ENCODE measurements at regions of chr11 and their contacts with region 1.

Region 1: DNA sequence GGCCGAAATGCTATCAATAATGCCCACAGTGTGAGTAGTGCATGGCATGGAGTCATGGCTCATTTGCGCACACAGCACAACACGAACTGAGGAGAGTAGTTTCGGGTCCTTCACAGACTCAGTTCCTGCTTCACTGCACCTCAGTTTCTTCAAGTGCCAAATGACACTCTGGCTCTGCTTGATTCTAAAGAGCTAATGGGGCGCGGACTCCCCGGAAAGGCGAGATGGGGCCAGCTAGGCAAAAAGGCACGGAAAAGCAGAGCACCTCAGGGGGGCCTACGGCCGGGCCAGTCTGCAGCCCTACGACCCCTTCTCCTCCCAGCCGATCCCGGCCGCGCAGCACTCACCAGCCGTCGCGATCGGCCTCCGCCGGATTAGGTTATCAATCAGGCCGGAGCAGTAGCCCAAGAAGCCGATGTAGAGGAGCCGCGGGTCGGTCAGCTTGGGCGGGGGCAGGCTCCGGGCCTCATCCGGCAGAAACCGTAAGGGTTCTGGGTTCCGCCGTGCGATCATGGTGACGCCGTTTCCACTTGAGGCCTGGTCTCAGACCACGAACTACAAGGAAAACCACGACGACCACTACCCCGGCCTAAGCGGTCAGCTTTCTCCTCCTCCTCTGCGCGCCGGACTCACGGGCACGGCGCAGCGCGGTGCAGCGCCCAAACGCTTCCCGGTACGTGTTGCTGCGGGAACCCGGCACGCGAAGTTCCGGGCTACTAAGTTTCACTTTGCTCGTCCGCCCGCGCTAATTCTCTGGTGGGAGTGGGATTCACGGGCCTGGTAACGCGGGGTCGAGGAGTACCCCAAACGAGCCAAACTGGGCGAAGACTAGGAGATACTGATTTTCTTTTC is at the start of gene NDUFC2:
- DNase-seq: peak; percentile 73 to 89 (median 82)
- H3K4me3 ChIP-seq: peak within 1 kb of the TSS; percentile 30 to 88 (median 76)
- H3K27ac ChIP-seq: peak within 1 kb of the TSS; percentile 58 to 93 (median 89)
- H3K4me1 ChIP-seq: peaks cover 18 to 43% of the 10 kb centered on the region in 2 donors
- H3K27me3 ChIP-seq: no peaks in the 10 kb centered on the region
- CTCF ChIP-seq: peak in 1 of 6 experiments; percentile 28
- POLR2A ChIP-seq: peak; percentile 64 to 80
- total RNA-seq, gene NDUFC2: 259 to 487 (median 380) TPM

Region 2: GRCh38 chr11:77497368-77497767 is 582.1 kb before region 1 on chr11:
- intact Hi-C with region 1: no loop called
- DNase-seq: no peak
- H3K4me3 ChIP-seq: no peak overlapping the region
- H3K27ac ChIP-seq: no peak overlapping the region
- H3K4me1 ChIP-seq: no peaks in the 10 kb centered on the region
- H3K27me3 ChIP-seq: no peaks in the 10 kb centered on the region
- CTCF ChIP-seq: no peak
- POLR2A ChIP-seq: no peak

Region 3: DNA sequence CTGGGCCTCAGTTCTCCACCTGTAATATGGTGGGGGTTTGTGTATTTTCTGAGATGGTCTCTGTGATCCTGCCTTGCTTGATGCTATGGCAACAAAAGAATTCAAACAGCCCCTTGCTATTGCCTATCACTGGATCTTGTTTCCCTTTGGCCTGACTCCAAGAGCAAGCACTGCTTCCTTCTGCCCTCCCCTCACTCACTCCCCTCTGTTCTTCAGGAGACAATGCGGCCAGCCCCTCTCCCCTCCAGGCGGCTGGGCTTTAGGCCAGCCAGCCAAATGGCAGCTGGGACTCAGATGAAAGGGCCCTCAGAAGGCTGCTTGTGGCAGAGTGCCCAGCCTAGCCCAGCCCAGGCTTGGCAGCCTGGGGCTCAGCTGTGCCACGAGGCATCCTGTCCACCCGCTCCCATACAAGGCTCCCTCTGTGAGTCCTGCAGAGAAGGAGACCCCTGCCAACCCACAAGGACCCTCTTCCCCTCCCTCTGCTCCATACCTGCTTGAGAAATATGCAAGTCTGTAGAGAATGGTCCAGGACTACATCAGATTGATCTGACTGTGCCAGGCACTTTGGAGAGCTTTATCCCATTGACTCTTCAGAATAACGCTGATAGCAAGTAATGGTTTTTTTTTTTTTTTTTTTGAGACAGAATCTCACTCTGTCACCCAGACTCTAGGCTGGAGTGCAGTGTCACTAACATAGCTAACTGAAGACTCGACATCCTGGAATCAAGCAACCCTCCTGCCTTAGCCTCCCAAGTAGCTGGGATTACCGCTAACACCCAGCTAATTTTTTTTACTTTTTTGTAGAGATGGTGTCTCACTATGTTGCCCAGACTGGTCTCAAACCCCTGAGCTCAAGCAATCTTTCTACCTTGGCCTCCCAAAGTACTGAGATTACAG is 48.8 kb before region 1 on chr11:
- intact Hi-C with region 1: no loop called
- DNase-seq: peak; percentile 70 to 85 (median 79)
- H3K4me3 ChIP-seq: no peak overlapping the region
- H3K27ac ChIP-seq: peak overlapping the region in 2 of 5 donors; percentile 28 to 36
- H3K4me1 ChIP-seq: peaks cover 22 to 23% of the 10 kb centered on the region in 2 donors
- H3K27me3 ChIP-seq: no peaks in the 10 kb centered on the region
- CTCF ChIP-seq: no peak
- POLR2A ChIP-seq: no peak

Region 4: GRCh38 chr11:78139422-78140391 is 60.2 kb after region 1 on chr11 and contains the start of gene ALG8:
- intact Hi-C with region 1: no loop called
- DNase-seq: peak; percentile 95 to 98 (median 97)
- H3K4me3 ChIP-seq: peak within 1 kb of the TSS; percentile 31 to 80 (median 64)
- H3K27ac ChIP-seq: peak within 1 kb of the TSS in 4 of 5 donors; percentile 38 to 81 (median 60)
- H3K4me1 ChIP-seq: peaks cover 11 to 23% of the 10 kb centered on the region in 2 donors
- H3K27me3 ChIP-seq: no peaks in the 10 kb centered on the region
- CTCF ChIP-seq: no peak
- POLR2A ChIP-seq: peak; percentile 59 to 84
- total RNA-seq, gene ALG8: 28.9 to 64.0 (median 49.2) TPM

Region 5: DNA sequence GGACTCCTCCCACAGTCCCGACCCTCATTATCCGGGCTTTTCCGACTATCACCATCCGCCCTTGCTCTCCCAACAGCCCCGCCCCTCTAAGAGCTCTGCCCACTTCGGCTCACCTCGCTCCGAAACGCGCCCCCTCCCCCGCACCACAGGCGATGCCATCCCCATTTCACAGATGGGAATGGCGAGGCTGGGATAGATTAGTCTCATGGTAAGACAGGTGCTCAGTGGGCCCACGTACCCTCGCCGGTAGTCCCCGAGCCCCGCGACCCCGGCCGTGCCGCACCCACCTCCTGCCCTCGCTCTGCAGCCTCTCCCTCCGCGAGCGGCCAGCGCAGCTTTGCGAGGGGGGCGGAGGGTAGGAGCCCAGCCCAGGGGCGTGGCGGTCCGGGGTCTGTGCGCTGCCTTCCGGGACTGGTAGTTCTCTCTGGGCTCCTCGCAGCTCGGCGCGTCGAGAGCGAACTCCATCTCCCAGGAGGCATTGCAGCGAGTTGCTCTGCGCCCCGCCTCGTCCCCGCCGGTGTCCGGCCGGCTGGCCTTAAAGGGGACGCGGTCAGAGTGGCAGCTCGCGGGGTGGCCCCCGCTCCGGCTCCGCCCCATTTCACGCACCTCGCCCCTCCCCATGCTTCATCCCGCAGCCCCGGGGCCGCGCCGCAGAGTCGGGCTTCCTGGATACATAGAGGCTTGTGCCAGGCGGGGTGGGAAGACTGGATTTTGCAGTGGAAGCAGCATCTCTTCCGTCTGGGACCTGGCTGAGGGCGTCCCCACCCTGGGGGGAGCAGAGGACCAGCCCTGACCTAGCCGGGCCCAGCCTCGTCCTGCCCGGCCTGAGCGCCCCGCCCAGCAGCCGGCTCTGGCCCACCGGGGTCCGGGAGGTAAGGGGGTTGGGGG is 109.1 kb after region 1 on chr11 and contains the starts of genes KCTD21 and USP35:
- intact Hi-C with region 1: loop called in 1 of 2 experiments (anchors 10 kb)
- DNase-seq: peak; percentile 97 to 99 (median 98)
- H3K4me3 ChIP-seq: peak within 1 kb of the TSS; percentile 73 to 97 (median 90)
- H3K27ac ChIP-seq: peak within 1 kb of the TSS; percentile 87 to 97 (median 91)
- H3K4me1 ChIP-seq: peaks cover 36 to 67% of the 10 kb centered on the region in 2 donors
- H3K27me3 ChIP-seq: no peaks in the 10 kb centered on the region
- CTCF ChIP-seq: peak in 1 of 6 experiments; percentile 15
- POLR2A ChIP-seq: peak; percentile 70 to 79
- total RNA-seq, gene KCTD21: 17.0 to 32.9 (median 28.3) TPM
- total RNA-seq, gene USP35: 13.6 to 47.9 (median 34.0) TPM

Region 6: GRCh38 chr11:78228467-78228866 is 149.0 kb after region 1 on chr11:
- intact Hi-C with region 1: no loop called
- DNase-seq: peak in 2 of 7 donors; percentile 26 to 54
- H3K4me3 ChIP-seq: no peak overlapping the region
- H3K27ac ChIP-seq: no peak overlapping the region
- H3K4me1 ChIP-seq: peaks cover 13 to 35% of the 10 kb centered on the region in 2 donors
- H3K27me3 ChIP-seq: no peaks in the 10 kb centered on the region
- CTCF ChIP-seq: peak; percentile 26 to 64 (median 55)
- POLR2A ChIP-seq: no peak